ENCODE measurements at regions of chr1 and their contacts with region 1.

Region 1: GRCh38 chr1:207279652-207280051 is 41.8 kb upstream of the CD55 start:
- DNase-seq: no peak
- ATAC-seq: no peak
- H3K4me3 Mint-ChIP-seq: no peak overlapping the region
- H3K27ac Mint-ChIP-seq: no peak overlapping the region
- H3K4me1 Mint-ChIP-seq: peaks cover 42% of the 10 kb centered on the region
- H3K27me3 Mint-ChIP-seq: no peaks in the 10 kb centered on the region

Region 2: DNA sequence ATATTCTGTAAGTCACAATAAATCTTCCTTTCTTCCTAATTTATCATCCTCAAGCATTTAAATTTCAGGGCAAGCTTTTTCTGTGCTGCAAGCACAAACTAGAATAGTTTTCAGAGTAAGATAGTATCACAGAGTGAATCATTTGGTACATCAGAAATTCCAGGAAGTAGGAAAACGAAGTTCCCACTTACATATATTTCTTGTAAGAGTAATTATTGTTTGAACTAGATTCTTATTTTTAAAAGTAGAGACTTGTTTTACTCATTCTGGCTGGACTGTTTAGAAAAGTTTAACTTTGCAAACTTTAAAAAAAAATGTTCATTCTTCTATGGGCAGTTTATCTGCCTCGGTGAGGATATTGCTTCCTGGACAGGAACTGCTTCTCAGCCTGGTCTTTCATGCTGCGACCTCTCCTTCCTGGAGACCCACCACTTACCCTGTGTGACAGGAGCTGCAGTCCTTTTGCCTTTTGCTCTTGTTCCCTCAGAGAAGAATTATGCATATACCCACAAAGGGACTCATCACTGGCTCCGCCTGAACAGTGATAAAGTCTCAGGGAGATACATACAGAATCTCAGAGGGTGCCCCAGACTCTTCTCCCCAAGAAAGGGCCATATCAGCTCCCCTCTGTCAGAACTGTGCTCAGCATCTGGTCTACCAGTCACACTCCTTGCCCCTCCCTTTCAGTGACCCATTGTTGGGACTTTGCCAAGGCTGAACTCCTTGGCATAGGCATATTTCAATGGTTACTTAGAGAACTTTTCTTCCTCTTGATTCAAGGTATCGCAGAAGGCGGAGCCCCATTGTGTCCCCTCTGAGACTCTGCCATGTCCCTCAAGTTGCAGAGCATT is 60.9 kb before region 1 on chr1:
- CTCF ChIA-PET with region 1: no interaction called
- POLR2A ChIA-PET with region 1: no interaction called
- intact Hi-C with region 1: loop called in 1 of 2 experiments (anchors 10 kb)
- DNase-seq: no peak
- ATAC-seq: no peak
- H3K4me3 Mint-ChIP-seq: no peak overlapping the region
- H3K27ac Mint-ChIP-seq: no peak overlapping the region
- H3K4me1 Mint-ChIP-seq: peaks cover 3% of the 10 kb centered on the region
- H3K27me3 Mint-ChIP-seq: no peaks in the 10 kb centered on the region

Region 3: GRCh38 chr1:207248544-207249198 is 31.0 kb before region 1 on chr1:
- CTCF ChIA-PET with region 1: no interaction called
- POLR2A ChIA-PET with region 1: no interaction called
- intact Hi-C with region 1: no loop called
- DNase-seq: no peak
- ATAC-seq: no peak
- H3K4me3 Mint-ChIP-seq: no peak overlapping the region
- H3K27ac Mint-ChIP-seq: no peak overlapping the region
- H3K4me1 Mint-ChIP-seq: peaks cover 3% of the 10 kb centered on the region
- H3K27me3 Mint-ChIP-seq: peaks cover 2% of the 10 kb centered on the region